Sigmoid colon (tissue), 7 donors: ENCODE measurements at regions of chr14 and their contacts with region 1.

Region 1: GRCh38 chr14:99683619-99684355 is at the start of gene CYP46A1:
- DNase-seq: peak; percentile 100
- H3K4me3 ChIP-seq: peak within 1 kb of the TSS; percentile 80 to 96 (median 87)
- H3K27ac ChIP-seq: peak within 1 kb of the TSS; percentile 92 to 97 (median 94)
- H3K4me1 ChIP-seq: peaks cover 0 to 17% (median 14%) of the 10 kb centered on the region in 4 donors
- H3K27me3 ChIP-seq: peaks cover 0 to 7% (median 0%) of the 10 kb centered on the region in 3 donors
- CTCF ChIP-seq: no peak
- EP300 ChIP-seq: no peak
- POLR2A ChIP-seq: no peak
- total RNA-seq, gene CYP46A1: 0.36 to 2.0 (median 1.6) TPM

Region 2: DNA sequence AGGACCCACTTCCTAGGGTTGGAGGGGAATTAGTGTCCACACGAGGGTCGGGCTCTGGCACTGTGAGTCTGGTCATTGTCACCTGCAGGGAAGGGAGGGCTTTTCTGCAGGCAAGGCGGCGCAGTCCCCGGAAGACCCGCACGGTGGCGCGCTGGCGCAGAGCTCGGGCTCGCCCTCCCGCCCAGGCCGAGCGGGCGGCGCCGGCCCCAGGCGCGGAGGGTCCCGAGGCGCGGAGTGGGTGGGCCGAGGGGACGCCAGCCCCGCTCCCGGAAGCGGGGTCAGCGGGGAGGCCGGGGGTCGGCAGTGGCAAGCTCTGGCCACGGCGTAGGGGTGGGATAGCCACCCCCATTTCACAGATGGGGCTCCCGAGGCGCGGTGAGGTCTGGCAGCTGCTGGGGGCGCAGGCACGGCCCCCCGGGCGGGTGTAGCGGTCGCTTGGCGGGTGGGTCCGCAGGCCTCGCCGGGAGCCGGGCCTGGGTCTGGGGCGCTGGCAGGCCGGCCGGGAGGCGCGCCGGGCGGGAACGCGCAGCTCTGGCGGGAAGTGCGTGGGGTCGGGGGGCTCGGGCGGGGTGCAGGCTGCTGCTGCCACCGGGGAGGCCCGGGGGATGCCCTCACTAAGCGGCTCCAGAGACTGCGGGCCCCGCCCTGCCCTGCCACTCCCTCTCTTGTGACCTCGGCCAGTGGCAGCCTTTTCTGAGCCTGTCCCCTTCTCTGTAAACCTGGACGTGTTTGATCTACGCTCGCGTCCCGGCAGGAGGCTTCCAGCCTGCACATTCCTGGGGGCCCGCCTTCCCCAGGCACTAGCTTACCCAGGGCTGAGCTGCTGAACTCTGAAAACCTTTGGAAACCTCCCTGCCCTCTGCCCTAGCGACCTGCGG is 46.4 kb after region 1 on chr14:
- intact Hi-C with region 1: loop called (anchors 2 kb)
- DNase-seq: peak; percentile 85
- H3K4me3 ChIP-seq: peak overlapping the region; percentile 40 to 84 (median 70)
- H3K27ac ChIP-seq: peak overlapping the region; percentile 38 to 70 (median 66)
- H3K4me1 ChIP-seq: peaks cover 0 to 28% (median 26%) of the 10 kb centered on the region in 4 donors
- H3K27me3 ChIP-seq: no peaks in the 10 kb centered on the region
- CTCF ChIP-seq: peak; percentile 42 to 95 (median 81)
- EP300 ChIP-seq: no peak
- POLR2A ChIP-seq: no peak

Region 3: GRCh38 chr14:99809360-99809759 is 125.6 kb after region 1 on chr14:
- intact Hi-C with region 1: loop called (anchors 5 kb)
- DNase-seq: peak; percentile 95
- H3K4me3 ChIP-seq: no peak overlapping the region
- H3K27ac ChIP-seq: peak overlapping the region; percentile 75 to 84 (median 80)
- H3K4me1 ChIP-seq: peaks cover 0 to 78% (median 63%) of the 10 kb centered on the region in 4 donors
- H3K27me3 ChIP-seq: no peaks in the 10 kb centered on the region
- CTCF ChIP-seq: no peak
- EP300 ChIP-seq: peak in 2 of 4 donors; percentile 34 to 44
- POLR2A ChIP-seq: no peak

Region 4: DNA sequence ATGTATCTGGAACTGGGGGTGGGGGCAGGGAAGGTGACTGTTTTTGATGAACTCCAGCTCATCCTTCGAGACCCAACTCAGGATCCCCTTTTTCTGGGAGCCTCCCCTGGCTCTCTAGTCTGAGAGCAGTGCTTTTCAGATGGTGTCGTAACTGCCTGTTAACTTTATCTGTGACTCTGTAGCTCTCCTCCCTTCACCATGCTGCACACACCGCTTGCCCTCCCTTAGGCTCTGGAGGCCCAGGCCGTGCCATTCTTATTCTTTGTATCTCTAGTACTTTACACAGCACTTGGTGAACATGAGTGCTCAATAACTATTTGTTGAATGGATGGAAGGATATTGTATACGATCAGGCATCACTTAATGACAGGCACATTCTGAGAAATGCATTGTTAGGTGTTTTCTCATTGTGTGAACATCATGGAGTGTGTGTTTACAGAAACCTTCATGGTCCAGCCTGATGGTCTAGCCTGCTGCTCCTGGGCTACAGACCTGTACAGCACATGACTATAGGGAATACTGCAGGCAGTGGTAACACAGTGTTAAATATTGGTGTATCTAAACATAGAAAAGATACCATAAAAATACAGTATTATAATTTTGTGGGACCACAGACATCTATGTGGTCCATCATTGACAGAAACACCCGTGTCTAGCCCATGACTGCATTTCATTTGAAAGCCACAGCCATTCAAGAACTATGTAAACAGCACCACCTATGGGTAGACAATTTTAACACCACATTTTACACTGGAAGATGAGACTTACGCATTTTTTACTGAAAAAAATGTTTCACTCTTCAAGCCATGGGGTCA is 201.3 kb after region 1 on chr14:
- intact Hi-C with region 1: loop called (anchors 2 kb)
- DNase-seq: peak; percentile 70
- H3K4me3 ChIP-seq: no peak overlapping the region
- H3K27ac ChIP-seq: no peak overlapping the region
- H3K4me1 ChIP-seq: peaks cover 0 to 17% (median 14%) of the 10 kb centered on the region in 4 donors
- H3K27me3 ChIP-seq: no peaks in the 10 kb centered on the region
- CTCF ChIP-seq: peak; percentile 72 to 85 (median 76)
- EP300 ChIP-seq: no peak
- POLR2A ChIP-seq: no peak